Upper lobe of right lung (tissue), 1 donor: ENCODE measurements at regions of chr6 and their contacts with region 1.

Region 1: GRCh38 chr6:1596088-1596852 is 13.4 kb upstream of the FOXC1 start:
- DNase-seq: peak; percentile 79
- ATAC-seq: peak; percentile 94
- H3K4me3 ChIP-seq: no peak overlapping the region
- H3K27ac ChIP-seq: no peak overlapping the region
- H3K4me1 ChIP-seq: peaks cover 6% of the 10 kb centered on the region
- H3K27me3 ChIP-seq: peaks cover 46% of the 10 kb centered on the region
- CTCF ChIP-seq: peak; percentile 94

Region 2: GRCh38 chr6:1351381-1352008 is 244.8 kb before region 1 on chr6:
- intact Hi-C with region 1: no loop called
- DNase-seq: no peak
- ATAC-seq: no peak
- H3K4me3 ChIP-seq: no peak overlapping the region
- H3K27ac ChIP-seq: no peak overlapping the region
- H3K4me1 ChIP-seq: peaks cover 26% of the 10 kb centered on the region
- H3K27me3 ChIP-seq: no peaks in the 10 kb centered on the region
- CTCF ChIP-seq: no peak

Region 3: GRCh38 chr6:2634139-2634964 is 1038.1 kb after region 1 on chr6:
- intact Hi-C with region 1: loop called (anchors 10 kb)
- DNase-seq: peak; percentile 89
- ATAC-seq: peak; percentile 97
- H3K4me3 ChIP-seq: peak overlapping the region; percentile 55
- H3K27ac ChIP-seq: peak overlapping the region; percentile 24
- H3K4me1 ChIP-seq: no peaks in the 10 kb centered on the region
- H3K27me3 ChIP-seq: no peaks in the 10 kb centered on the region
- CTCF ChIP-seq: peak; percentile 99